Heart right ventricle (tissue), 16 donors: ENCODE measurements at regions of chr19 and their contacts with region 1.

Region 1: GRCh38 chr19:11380653-11381534 is 3.2 kb downstream of the EPOR start:
- DNase-seq: peak; percentile 93 to 97
- ATAC-seq: peak; percentile 88 to 94 (median 92)
- H3K4me3 ChIP-seq: peak overlapping the region; percentile 36 to 87 (median 65)
- H3K27ac ChIP-seq: peak overlapping the region; percentile 47 to 87 (median 80)
- H3K4me1 ChIP-seq: peaks cover 20 to 71% (median 52%) of the 10 kb centered on the region in 9 donors
- H3K27me3 ChIP-seq: peaks cover 0 to 24% (median 9%) of the 10 kb centered on the region in 7 donors
- CTCF ChIP-seq: peak; percentile 60 to 89 (median 77)

Region 2: DNA sequence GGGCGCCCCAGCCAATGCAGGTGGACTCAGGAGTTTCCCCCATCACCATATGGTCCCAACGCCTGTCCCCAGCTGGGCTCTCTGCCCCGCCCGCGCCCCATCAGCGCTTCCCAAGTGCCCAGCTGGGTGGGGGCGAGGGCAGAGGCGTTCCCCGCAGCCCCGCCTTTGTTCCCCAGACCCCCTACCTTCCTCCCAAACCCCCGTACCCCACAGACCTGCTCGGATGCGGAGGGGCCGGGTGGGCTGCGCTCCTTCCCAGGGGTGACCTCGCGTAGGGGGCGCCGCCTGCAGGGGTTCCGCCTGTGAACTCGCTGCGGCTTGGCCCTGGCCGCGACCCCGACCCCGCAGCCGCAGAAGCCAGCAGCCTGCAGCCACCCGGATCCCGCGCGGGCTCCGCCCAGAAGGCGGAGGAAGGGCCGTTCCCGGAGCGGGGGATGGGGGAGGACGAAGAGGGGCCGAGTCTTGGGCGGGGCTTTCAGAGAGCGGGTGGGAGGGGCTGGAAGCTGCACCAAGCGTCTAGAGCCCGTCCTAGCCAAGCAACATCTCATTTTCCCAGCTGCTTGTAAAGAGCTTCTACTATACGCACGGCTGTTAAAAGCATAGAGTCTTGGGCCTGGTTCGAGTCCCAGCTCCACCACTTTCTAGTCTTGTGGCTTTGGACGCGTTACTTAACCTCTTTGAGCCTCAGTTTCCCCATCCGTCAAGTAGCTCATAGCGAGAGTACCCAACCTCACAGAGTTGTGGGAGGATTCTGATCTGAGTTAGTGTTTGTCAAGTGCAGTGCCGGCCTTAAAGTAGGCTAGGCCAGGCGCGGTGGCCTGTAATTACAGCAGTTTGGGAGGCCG is 41.4 kb before region 1 on chr19 and contains the start of gene RAB3D:
- intact Hi-C with region 1: loop called in 1 of 10 experiments (anchors 1 kb)
- DNase-seq: peak; percentile 95 to 96
- ATAC-seq: peak; percentile 93 to 99 (median 97)
- H3K4me3 ChIP-seq: peak within 1 kb of the TSS; percentile 58 to 84 (median 81)
- H3K27ac ChIP-seq: peak within 1 kb of the TSS; percentile 23 to 91 (median 82)
- H3K4me1 ChIP-seq: peaks cover 3 to 45% (median 19%) of the 10 kb centered on the region in 9 donors
- H3K27me3 ChIP-seq: no peaks in the 10 kb centered on the region
- CTCF ChIP-seq: no peak
- total RNA-seq, gene RAB3D: 4.5 to 11.6 (median 6.3) TPM

Region 3: DNA sequence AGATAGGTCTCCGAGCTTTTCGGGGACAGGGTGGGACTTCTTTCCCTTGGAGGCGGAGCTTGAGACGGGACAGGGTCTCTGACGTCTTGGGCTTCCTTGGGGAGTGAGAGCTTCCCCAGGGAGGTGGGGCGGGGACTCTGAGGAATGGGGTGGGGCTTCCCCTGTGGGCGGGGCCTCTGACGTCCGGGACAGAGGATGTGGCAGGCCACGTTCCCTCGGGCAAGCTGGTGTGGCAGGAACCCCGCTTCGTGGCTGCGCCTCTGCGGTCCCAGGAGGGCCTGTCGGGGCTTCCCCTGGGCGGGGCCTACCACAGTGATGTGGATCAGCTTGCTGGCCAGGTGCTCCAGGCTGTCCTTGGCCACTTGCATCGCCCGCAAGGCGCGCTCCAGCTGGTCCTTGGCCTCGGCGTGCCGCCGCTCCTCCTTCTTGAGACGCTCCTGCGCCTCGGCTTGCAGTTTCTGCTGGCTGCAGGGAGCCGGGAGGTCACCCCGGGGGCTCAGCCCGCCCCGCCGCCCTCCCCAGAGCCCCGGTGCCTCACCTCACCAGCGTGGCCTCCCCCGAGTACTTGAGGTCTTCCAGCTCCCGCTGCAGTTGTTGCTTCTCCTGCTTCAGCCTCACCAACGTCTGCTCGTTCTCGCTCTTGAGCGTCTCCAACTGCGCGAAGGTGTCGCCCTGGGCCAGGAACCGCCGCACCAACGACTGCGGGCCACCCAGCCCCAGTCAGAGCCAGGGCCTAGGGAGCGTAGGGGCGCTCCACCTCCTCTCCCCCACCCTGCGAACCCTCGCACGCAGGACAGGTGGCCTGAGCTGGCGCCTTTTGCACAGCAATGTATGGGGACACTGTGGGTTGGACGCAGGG is 41.5 kb after region 1 on chr19:
- intact Hi-C with region 1: loop called in 1 of 10 experiments (anchors 5 kb)
- DNase-seq: peak; percentile 79 to 87
- ATAC-seq: peak; percentile 48 to 89 (median 74)
- H3K4me3 ChIP-seq: peak overlapping the region in 9 of 10 donors; percentile 16 to 50 (median 45)
- H3K27ac ChIP-seq: peak overlapping the region in 9 of 10 donors; percentile 20 to 82 (median 55)
- H3K4me1 ChIP-seq: peaks cover 12 to 53% (median 37%) of the 10 kb centered on the region in 9 donors
- H3K27me3 ChIP-seq: peaks cover 10 to 69% (median 64%) of the 10 kb centered on the region in 7 donors
- CTCF ChIP-seq: no peak

Region 4: DNA sequence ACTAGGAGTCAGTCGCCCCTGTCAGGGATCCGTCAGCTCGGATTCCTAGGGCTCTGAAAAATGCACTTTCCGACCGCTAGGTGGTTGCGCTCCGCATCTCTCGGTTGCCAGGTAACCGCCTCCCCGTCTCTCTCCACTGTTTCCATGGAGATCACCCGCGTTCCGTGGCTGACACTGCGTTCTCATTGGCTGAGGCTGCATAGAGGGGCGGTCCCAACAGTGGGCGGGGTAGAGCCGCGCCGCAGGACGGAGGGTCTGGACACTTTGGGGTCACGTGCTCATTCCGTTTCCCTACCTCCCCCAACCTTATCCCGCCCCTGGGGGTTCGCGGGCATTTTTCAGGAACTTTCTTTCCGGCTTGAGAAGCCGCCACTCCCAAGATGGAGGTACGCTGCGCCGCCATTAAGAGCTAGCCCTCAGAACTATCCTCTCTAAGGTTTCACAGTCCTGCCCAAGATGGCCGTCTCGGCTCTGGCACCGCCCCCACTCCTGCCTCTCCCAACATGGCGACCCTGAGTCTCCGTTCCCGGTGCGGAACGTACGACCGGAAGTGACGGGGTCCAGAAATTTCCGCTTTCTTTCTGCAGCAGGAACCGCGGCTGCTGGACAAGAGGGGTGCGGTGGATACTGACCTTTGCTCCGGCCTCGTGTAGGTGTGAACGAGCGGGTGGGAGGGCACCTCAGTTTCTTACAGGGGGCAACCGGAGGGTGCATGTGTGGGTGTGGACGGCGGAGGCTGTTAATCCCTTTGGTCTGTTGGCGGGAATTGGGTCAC is 54.4 kb after region 1 on chr19 and contains the starts of genes ODAD3 and PRKCSH:
- intact Hi-C with region 1: loop called in 7 of 10 experiments (anchors 5 to 10 kb)
- DNase-seq: peak; percentile 98 to 99
- ATAC-seq: peak; percentile 98 to 99 (median 98)
- H3K4me3 ChIP-seq: peak within 1 kb of the TSS; percentile 50 to 87 (median 78)
- H3K27ac ChIP-seq: peak within 1 kb of the TSS; percentile 53 to 86 (median 80)
- H3K4me1 ChIP-seq: peaks cover 8 to 23% (median 20%) of the 10 kb centered on the region in 9 donors
- H3K27me3 ChIP-seq: no peaks in the 10 kb centered on the region
- CTCF ChIP-seq: peak; percentile 60 to 95 (median 89)
- total RNA-seq, gene ODAD3: 0.17 to 0.64 (median 0.34) TPM in 9 of 10 donors, not detected in the other
- total RNA-seq, gene PRKCSH: 106 to 177 (median 123) TPM